ENCODE measurements at regions of chr10 and their contacts with region 1.

Region 1: GRCh38 chr10:96129387-96130325 is at the start of gene ZNF518A:
- DNase-seq: peak; percentile 88
- H3K4me3 ChIP-seq: peak within 1 kb of the TSS; percentile 77 to 85
- H3K27ac ChIP-seq: peak within 1 kb of the TSS; percentile 89 to 99
- H3K4me1 ChIP-seq: peaks cover 5 to 7% of the 10 kb centered on the region in 2 experiments; a peak in 3 of 4 replicates
- H3K27me3 ChIP-seq: no peaks in the 10 kb centered on the region
- CTCF ChIP-seq: no peak
- EP300 ChIP-seq: peak in 1 of 2 experiments; percentile 47; a peak in 2 of 4 replicates
- RAD21 ChIP-seq: no peak
- polyA plus RNA-seq, gene ZNF518A: 1.7 and 2.4 TPM in 2 replicates

Region 2: DNA sequence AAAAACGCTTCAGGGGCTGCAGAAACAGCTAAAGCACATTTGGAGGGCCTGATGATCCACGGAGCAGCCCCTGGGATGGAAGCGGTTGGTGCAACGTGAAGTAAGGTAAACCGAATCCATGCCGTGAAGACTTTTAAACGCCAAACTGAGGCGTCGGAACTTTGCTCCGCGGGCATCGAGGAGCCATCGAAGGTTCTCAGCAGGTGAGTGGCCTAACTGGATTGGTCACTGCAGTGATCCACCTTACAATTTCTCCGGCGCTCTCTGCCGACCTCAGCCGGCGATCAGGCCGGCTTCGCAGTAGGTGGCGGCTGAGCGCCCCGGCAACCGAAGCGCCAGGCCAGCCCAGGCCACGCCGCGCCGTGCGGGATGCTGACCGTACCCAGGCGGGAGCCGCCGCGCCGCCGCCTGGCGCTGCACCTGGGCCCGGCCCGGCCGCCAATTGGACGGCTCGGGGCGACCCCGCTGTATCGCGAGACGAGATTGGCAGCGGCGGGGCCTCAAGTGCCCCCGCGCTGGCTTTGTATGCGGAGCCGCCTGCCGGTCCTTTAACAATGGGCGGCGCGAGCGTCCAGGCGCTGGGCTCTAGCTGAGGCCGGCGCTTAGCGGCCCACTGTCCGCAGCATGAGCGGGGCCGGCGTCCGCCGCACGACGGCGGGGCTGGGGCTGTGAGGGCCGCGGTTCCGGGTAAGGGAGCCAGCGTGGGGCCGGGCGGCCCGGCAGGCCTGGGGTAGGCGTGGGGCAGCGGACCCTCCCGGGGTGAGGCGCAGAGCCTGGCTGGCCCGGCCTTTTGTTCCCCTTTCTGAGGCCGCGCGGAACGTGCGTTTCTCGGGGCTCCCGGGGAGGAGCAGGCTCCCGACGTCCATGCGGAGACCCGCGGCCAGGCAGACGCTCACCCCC is 86.4 kb before region 1 on chr10 and contains the start of gene CCNJ:
- CTCF ChIA-PET with region 1: no interaction called
- POLR2A ChIA-PET with region 1: interaction called, 20 read pairs
- DNase-seq: peak; percentile 99
- H3K4me3 ChIP-seq: peak within 1 kb of the TSS; percentile 76 to 92
- H3K27ac ChIP-seq: peak within 1 kb of the TSS; percentile 75 to 89
- H3K4me1 ChIP-seq: peaks cover 0 to 6% of the 10 kb centered on the region in 2 experiments; a peak in 2 of 4 replicates
- H3K27me3 ChIP-seq: no peaks in the 10 kb centered on the region
- CTCF ChIP-seq: no peak
- EP300 ChIP-seq: no peak
- RAD21 ChIP-seq: no peak
- polyA plus RNA-seq, gene CCNJ: 4.3 and 5.6 TPM in 2 replicates

Region 3: DNA sequence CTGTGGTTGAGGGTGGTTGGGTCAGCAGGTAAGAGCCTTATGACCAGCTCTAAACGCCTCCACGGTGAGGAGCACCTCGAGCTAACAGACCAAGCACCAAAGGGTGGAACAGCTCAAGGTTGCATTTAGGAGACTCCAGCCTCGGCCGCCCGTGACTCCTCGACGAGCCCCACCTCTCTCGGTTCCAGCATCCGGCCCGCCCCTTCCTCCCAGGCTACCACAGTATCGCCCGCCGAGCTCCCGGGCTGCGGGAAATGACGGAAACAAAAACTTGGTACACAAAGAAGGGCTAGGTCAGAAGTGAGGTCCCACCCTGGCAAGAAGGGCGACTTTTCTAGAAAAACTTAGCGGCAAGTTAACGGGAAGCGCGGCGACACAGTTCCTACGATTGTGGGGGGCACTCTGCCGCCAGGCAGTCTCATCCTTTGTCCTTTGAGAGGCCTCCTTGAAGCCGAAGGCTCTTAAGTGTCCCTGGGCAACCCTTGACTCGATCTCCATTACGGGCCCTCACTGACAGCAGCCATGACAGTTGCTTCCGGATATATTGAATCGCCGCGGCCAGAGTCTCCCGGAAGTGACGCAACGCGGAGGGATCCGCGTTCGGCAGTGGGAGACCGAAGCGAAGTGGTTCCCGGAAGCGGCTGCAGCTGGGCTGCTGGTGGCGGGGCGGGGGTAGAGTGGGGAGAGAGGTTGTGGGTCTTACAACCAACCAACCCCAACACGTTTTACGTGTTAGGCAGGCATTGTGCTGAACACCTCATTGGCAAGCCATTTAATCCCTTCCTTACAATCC is 39.8 kb before region 1 on chr10:
- CTCF ChIA-PET with region 1: interaction called, 6 read pairs
- POLR2A ChIA-PET with region 1: interaction called, 114 read pairs
- DNase-seq: peak; percentile 89
- H3K4me3 ChIP-seq: peak overlapping the region; percentile 81 to 82
- H3K27ac ChIP-seq: peak overlapping the region; percentile 89 to 94
- H3K4me1 ChIP-seq: peaks cover 0 to 4% of the 10 kb centered on the region in 2 experiments; a peak in 2 of 4 replicates
- H3K27me3 ChIP-seq: no peaks in the 10 kb centered on the region; the same call in 1 of the 2 replicates
- CTCF ChIP-seq: no peak
- EP300 ChIP-seq: peak; percentile 4 to 53; a peak in 1 of 4 replicates
- RAD21 ChIP-seq: no peak

Region 4: GRCh38 chr10:96118604-96119450 is 10.8 kb before region 1 on chr10:
- CTCF ChIA-PET with region 1: no interaction called
- POLR2A ChIA-PET with region 1: interaction called, 14 read pairs
- DNase-seq: no peak
- H3K4me3 ChIP-seq: no peak overlapping the region
- H3K27ac ChIP-seq: no peak overlapping the region
- H3K4me1 ChIP-seq: no peaks in the 10 kb centered on the region
- H3K27me3 ChIP-seq: peaks cover 18% of the 10 kb centered on the region; the same call in 1 of the 2 replicates
- CTCF ChIP-seq: no peak
- EP300 ChIP-seq: no peak
- RAD21 ChIP-seq: no peak